Posterior vena cava (tissue), 2 donors: ENCODE measurements at regions of chr18 and their contacts with region 1.

Region 1: GRCh38 chr18:23934252-23934651 is 80.3 kb upstream of the TTC39C start:
- DNase-seq: no peak

Region 2: GRCh38 chr18:23918401-23919032 is 15.7 kb before region 1 on chr18:
- intact Hi-C with region 1: no loop called
- DNase-seq: peak; percentile 90

Region 3: DNA sequence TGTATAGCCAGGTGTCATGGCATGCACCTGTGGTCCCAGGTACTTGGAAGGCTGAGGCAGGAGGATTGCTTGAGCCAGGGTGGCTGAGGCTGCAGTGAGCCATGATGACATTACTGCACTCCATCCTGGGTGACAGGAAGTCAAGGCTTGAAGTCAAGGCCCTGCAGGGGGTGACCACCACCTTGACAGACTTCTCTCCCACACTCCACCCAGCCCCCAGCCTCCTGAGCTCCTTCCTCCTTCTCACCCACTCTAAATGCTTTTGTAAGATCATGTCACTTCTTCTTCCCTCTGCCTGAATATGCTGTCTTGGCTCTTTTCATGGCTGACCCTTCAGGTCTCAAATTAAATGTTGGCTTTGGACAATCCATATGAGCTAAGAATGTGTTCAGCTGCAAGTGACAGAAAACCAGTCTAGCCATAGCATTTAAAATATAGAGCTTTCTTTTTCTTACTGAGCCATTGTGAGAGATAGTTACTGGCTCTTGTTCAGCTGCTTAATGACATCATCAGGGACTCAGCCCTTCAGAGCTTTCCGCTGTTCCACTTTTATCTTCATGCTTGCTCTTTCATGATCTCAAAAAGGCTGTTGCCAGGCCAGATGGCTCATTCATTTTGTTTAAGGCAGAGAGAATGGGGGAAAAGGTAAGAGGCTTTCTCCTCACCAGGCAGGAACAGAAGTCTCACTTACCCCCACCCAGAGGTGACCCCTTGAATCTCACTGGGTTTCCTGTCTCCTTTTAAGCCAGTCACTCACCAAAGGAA is 43.6 kb after region 1 on chr18:
- intact Hi-C with region 1: loop called in 1 of 2 experiments (anchors 5 kb)
- DNase-seq: no peak

Region 4: DNA sequence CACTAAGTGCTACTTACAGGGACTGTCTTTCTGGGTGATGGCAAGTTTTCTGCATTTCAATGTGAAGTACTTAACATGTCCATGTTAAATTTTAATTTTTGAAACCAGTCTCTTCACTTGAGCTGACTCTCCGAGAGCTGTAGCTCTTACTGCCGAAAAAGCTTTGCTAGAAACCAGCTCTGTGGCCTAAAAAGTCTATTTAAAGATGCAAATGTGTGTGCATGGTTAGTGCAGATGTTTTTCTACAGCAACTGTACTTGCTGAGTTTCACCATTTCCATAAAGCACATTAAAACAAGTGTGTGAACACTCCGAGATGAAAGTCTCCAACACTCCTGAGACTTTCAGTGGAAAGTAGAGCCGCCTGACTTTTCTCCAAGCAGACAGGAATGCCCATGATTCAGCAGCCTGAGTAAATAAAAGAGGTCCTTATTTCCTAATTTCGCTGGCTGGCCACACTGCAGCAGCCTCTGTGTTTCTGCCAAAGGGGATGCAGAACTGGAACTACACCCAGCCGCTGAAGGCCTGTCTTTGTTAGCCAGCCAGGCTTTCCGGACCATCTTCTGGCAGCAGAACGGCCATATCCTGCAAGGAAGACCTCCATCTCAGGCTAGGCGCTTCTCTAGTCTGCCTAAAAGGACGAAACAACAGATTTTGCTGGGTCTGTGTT is 1296.5 kb after region 1 on chr18:
- intact Hi-C with region 1: no loop called
- DNase-seq: peak; percentile 89